GM18951 (cell line): ENCODE measurements at regions of chr1 and their contacts with region 1.

Region 1: DNA sequence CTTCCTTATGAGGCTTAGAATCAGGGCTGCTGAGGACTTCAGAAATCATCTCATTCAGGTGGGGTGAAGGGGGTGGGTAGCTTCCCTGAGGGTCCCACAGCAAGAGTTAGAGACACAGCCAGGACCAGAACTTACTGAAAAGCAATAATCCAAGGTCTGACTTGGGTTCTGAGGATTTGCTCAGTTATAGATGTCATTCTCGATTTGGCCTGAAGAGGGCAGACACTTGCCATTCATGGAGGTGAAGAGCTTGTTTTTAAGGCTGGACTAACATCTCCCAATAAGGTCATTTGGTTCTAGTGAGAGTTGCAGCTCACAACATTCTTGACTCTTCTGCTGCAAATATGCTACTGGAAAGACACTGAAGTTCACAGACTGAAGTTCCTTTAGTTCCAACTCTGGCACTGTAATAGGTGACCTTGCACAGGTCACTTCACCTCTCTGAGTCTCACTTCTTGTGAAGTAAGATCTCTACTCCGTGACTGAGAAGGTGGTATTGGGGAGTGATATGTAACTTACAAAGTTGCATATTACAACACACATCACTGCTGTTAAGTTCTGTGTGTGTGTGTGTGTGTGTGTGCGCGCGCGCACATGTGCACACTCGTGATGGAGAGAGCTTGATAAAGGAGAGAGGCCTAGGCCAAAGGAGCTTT is 69.8 kb upstream of the DIRAS3 start:
- POLR2A ChIP-seq: no peak

Region 2: DNA sequence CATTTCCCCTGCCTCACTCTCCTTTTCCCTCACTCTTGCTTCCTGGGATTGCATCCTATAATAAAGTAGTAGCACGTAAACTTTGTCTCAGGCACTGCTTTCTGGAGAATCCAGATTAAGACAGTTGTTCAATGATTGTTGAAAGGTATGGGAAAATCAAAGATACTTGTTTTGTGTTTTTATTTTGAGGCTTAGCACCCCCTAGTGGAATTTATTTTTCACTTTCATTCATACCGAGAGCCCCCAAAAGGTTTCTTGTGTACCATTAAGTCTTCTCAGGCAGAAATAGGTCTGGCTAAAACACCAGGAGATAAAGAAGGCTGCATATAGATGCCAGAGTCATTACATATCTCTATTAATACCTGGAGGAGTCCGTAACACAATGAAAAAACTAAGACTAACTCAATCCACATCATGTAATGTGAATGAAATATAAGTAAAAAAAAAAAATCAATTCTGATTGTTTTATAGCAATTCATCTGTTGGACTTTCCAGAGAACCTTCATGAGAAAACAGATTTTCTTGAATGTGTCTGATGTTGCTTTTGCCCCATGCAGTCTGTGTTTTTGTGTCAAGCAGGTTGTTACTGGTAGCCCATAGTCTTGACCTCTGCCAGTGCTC is 226.0 kb after region 1 on chr1:
- in situ Hi-C with region 1: loop called (anchors 10 kb)
- POLR2A ChIP-seq: no peak